ENCODE measurements at regions of chr9 and their contacts with region 1.

Region 1: GRCh38 chr9:14170973-14171596 is 142.9 kb downstream of the NFIB start:
- DNase-seq: no peak
- ATAC-seq: no peak
- H3K4me3 ChIP-seq: no peak overlapping the region
- H3K27ac ChIP-seq: no peak overlapping the region
- H3K4me1 ChIP-seq: peaks cover 6 to 15% of the 10 kb centered on the region in 2 donors
- H3K27me3 ChIP-seq: no peaks in the 10 kb centered on the region
- CTCF ChIP-seq: no peak
- POLR2A ChIP-seq: no peak

Region 2: GRCh38 chr9:14119694-14120514 is 51.2 kb before region 1 on chr9:
- in situ Hi-C with region 1: loop called in 1 of 4 experiments (anchors 10 kb)
- intact Hi-C with region 1: no loop called
- DNase-seq: peak in 1 of 2 donors; percentile 10
- ATAC-seq: peak; percentile 41 to 54
- H3K4me3 ChIP-seq: no peak overlapping the region
- H3K27ac ChIP-seq: no peak overlapping the region
- H3K4me1 ChIP-seq: no peaks in the 10 kb centered on the region
- H3K27me3 ChIP-seq: no peaks in the 10 kb centered on the region
- CTCF ChIP-seq: no peak
- POLR2A ChIP-seq: no peak

Region 3: DNA sequence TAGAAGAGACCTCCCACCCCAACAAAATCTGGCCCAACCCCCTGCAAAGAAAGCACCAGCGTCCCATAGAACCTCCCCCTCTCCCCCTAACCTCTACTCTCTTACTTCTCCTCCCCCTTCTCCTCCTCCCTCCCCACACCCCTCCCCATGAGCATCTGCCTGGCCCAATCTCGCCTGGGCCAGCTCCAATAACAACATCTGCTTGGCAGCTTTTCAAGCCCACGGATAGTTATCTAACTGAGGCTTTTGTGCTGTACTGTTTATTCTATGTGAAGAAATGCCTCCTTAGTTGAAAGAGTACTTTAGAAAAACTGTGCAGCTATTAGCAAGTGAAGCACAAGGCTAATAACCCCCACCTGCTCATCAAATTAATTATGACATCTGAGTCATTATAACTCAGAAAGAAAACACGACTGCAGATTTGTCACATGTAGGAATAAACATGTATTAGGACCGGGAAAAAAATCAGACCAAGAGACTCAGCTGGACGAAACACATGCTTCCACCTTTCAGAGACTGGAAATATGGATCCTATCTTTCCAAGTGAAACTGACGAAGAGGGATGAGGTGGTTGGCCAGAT is 100.1 kb after region 1 on chr9:
- in situ Hi-C with region 1: no loop called
- intact Hi-C with region 1: no loop called
- DNase-seq: peak; percentile 30 to 34
- ATAC-seq: peak in 1 of 2 donors; percentile 49
- H3K4me3 ChIP-seq: peak overlapping the region in 1 of 4 donors; percentile 6
- H3K27ac ChIP-seq: peak overlapping the region; percentile 11 to 64 (median 63)
- H3K4me1 ChIP-seq: peaks cover 72 to 78% of the 10 kb centered on the region in 2 donors
- H3K27me3 ChIP-seq: no peaks in the 10 kb centered on the region
- CTCF ChIP-seq: no peak
- POLR2A ChIP-seq: no peak

Region 4: DNA sequence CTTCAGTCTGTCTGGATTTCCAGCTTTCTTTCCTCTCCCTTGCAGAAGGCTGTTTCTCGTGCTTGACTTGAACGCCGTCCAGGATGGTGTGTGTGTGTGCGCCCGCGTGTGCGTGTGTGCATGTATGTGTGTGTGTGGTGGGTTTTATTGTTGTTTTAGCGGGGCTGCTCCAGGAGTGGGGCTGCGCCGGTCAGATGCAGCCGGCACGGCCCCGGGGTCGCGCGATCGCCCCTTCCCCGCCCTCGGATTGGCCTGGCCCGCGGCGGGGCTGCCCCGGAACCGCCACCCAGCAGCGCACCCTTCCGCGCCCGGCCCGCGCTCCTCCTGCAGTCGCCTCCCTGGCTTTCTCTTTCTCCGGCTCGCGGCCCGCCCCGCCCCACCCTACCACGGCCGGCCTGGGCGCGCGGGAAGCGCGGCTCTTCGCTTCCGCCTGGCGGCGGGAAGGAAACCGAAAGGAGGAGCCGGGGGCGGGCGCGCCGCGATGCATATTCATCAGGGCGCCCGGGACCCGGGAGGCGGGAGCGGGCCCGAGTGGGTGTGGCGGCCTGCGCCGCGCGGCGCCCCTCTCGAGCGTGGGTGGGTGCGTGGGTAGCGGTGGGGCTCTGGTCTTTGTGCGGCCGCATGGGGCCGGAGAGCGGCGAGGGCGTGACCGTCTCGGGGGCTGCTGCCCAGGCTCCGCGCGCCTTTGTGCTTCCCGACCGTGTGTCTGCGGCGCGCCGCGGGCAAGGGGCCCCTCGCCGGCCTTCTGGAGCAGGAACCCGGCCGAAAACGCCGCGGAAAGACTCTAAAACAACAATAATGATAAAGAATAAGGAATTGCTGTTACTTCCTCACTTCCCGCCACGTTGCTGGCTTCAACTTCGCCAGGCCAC is 151.4 kb after region 1 on chr9:
- in situ Hi-C with region 1: no loop called
- intact Hi-C with region 1: no loop called
- DNase-seq: peak; percentile 86 to 92
- ATAC-seq: peak; percentile 67 to 76
- H3K4me3 ChIP-seq: peak overlapping the region; percentile 69 to 79 (median 77)
- H3K27ac ChIP-seq: peak overlapping the region; percentile 92 to 99 (median 98)
- H3K4me1 ChIP-seq: peaks cover 70 to 84% of the 10 kb centered on the region in 2 donors
- H3K27me3 ChIP-seq: no peaks in the 10 kb centered on the region
- CTCF ChIP-seq: peak; percentile 59 to 77 (median 66)
- POLR2A ChIP-seq: peak; percentile 62 to 78

Measured in gastrocnemius medialis (tissue), 4 donors.